Activated CD4-positive, alpha-beta T cell treated with anti-CD3 and anti-CD28 coated beads, Interleukin-2, amount 10 ng/mL, durations not matched to agents 7 days and 5 days (primary cell): ENCODE measurements at regions of chr11 and their contacts with region 1.

Region 1: DNA sequence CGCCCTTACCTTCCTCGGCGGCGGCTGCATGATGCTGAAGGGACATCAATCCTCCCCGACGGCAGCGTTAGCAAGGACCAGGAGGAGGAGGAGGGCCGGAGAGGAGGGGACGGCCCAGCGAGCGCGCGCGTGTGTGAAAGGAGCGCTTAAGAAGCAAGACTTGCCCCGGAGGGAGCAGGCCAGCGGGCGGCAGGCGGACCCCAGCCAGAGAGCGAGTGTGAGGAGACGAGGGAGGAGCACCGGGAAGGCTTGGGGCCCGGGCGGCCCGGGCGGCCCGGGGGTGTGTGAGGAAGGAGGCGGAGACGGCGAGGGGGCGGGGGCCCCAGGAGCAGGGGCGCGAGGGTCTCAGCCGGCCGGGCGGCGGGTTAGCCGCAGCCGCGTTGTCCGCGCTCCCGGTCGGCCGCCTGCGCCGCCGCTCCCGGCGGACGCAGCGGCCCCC is 251 bp downstream of the FCHSD2 start:
- DNase-seq: peak; percentile 59
- H3K4me3 Mint-ChIP-seq: peak overlapping the region; percentile 97
- H3K27ac Mint-ChIP-seq: peak overlapping the region; percentile 94
- H3K4me1 Mint-ChIP-seq: peaks cover 61% of the 10 kb centered on the region
- H3K27me3 Mint-ChIP-seq: no peaks in the 10 kb centered on the region

Region 2: GRCh38 chr11:73072901-73073481 is 68.9 kb before region 1 on chr11:
- CTCF ChIA-PET with region 1: no interaction called
- POLR2A ChIA-PET with region 1: no interaction called
- DNase-seq: peak; percentile 9
- H3K4me3 Mint-ChIP-seq: peak overlapping the region; percentile 7
- H3K27ac Mint-ChIP-seq: peak overlapping the region; percentile 20
- H3K4me1 Mint-ChIP-seq: peaks cover 26% of the 10 kb centered on the region
- H3K27me3 Mint-ChIP-seq: no peaks in the 10 kb centered on the region

Region 3: DNA sequence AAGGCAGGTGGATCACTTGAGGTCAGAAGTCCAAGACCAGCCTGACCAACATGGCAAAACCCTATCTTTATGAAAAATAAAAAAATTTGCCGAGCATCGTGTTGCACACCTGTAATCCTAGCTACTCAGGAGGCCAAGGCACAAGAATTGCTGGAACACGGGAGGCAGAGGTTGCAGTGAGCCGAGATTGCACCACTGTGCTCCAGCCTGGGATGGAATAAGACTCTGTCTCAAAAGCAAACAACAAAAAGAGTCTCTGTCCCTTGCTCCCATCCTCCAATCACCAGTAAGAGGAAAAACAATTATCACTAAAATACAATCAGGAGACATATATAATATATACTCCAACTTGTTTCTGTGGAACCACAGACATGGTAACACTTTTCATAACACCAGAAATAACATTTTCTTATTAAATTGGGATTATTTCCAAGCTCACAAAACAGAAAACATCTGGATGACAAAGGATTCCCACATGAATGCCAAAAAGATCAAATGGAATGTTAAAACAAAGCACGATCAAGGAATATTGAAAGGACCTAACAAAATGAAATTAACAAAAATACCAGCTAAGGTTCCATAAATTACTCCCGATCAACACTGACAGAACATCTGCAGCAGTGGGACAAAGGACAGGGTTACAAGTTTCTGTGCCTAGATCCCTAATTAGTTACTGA is 14.9 kb before region 1 on chr11:
- CTCF ChIA-PET with region 1: interaction called, 22 read pairs
- POLR2A ChIA-PET with region 1: no interaction called
- DNase-seq: no peak
- H3K4me3 Mint-ChIP-seq: no peak overlapping the region
- H3K27ac Mint-ChIP-seq: no peak overlapping the region
- H3K4me1 Mint-ChIP-seq: no peaks in the 10 kb centered on the region
- H3K27me3 Mint-ChIP-seq: no peaks in the 10 kb centered on the region

Region 4: DNA sequence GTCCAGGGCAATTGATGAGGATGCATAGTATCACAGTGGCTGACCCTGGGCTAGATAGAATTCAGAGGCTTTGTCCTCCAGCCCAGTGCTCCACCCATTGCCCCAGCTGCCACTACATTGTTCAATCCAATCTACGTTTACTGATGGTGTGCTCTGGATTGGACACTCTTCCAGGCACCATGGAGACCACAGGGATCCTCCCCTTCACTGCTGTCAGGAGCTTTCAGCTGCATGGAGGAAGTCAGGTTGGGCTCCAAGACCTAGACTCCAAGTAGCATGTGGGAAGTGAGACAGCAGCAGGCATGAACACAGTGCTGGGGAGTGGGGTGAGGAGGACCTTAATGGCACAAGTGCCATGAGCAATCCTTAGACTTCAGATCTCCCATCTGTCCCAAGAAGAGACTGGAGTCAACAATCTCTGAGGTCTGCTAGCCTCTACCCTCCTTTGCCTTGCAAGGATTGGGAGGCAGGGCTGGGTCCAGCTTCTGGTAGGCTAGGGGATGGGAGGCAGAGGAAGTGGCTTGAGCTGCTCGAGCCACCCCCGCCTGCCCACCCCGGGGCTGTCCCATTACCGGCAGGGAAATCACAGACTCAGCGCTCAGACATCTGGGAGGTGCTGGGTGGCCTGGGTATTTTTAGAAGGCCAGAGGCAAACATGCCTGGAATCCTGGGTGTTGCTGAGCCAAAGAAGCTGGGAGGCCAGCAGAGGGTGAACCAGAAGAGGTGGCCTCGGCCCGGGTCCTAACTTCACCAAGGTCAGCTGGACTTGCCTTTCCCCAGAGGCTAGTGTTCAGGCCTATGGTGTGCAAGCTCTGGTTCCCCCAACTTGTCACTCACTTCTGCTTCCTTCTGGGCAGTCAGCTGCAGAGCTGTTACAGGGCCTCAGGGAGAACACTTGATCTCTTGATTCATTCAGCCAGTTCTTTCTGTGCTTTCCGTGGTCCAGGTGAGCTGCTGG is 15.5 kb after region 1 on chr11:
- CTCF ChIA-PET with region 1: interaction called, 86 read pairs
- POLR2A ChIA-PET with region 1: interaction called, 8 read pairs
- DNase-seq: no peak
- H3K4me3 Mint-ChIP-seq: no peak overlapping the region
- H3K27ac Mint-ChIP-seq: peak overlapping the region; percentile 51
- H3K4me1 Mint-ChIP-seq: peaks cover 56% of the 10 kb centered on the region
- H3K27me3 Mint-ChIP-seq: no peaks in the 10 kb centered on the region

Region 5: GRCh38 chr11:73164803-73165540 is 23.1 kb after region 1 on chr11:
- CTCF ChIA-PET with region 1: interaction called, 86 read pairs
- POLR2A ChIA-PET with region 1: interaction called, 3 read pairs
- DNase-seq: no peak
- H3K4me3 Mint-ChIP-seq: no peak overlapping the region
- H3K27ac Mint-ChIP-seq: no peak overlapping the region
- H3K4me1 Mint-ChIP-seq: peaks cover 9% of the 10 kb centered on the region
- H3K27me3 Mint-ChIP-seq: peaks cover 8% of the 10 kb centered on the region

Region 6: DNA sequence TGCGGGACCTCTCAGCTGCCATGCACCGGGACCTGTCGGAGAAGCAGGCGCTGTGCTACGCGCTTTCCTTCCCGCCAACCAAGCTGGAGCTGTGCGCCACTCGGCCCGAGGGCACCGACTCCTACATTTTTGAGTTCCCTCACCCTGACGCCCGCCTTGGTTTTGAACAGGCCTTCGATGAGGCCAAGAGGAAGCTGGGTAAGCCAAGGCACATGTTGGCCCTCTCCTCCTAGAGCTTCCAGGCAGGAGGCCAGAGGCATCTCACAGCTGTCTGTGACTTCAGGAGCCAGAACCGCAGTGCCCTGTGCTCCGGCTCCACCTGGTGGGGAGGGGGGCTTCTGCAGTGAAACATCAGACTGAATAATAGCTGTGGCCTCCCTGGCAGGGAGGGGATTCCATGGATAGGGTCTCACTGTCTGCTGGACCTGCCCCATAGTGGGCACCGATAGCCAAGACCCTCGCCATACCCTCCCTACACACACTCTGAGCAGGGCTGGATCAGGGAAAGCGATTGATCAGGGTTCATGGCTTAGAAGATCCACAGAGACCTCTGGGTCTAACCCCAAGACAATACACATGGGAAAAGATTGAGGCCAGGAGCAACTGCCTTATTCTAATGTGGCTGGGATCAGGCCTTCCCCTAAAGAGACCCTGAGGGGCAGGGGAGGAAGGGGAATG is 218.6 kb after region 1 on chr11:
- CTCF ChIA-PET with region 1: no interaction called
- POLR2A ChIA-PET with region 1: no interaction called
- DNase-seq: peak; percentile 46
- H3K4me3 Mint-ChIP-seq: no peak overlapping the region
- H3K27ac Mint-ChIP-seq: no peak overlapping the region
- H3K4me1 Mint-ChIP-seq: peaks cover 2% of the 10 kb centered on the region
- H3K27me3 Mint-ChIP-seq: no peaks in the 10 kb centered on the region